PC-3 (cell line): ENCODE measurements at regions of chr7 and their contacts with region 1.

Region 1: GRCh38 chr7:116236020-116236630 is 25.8 kb downstream of the TES start:
- DNase-seq: peak; percentile 70
- ATAC-seq: peak; percentile 42
- H3K4me3 ChIP-seq: no peak overlapping the region
- H3K27ac ChIP-seq: no peak overlapping the region
- H3K4me1 ChIP-seq: peaks cover 26% of the 10 kb centered on the region
- H3K27me3 ChIP-seq: no peaks in the 10 kb centered on the region
- CTCF ChIP-seq: peak; percentile 72

Region 2: DNA sequence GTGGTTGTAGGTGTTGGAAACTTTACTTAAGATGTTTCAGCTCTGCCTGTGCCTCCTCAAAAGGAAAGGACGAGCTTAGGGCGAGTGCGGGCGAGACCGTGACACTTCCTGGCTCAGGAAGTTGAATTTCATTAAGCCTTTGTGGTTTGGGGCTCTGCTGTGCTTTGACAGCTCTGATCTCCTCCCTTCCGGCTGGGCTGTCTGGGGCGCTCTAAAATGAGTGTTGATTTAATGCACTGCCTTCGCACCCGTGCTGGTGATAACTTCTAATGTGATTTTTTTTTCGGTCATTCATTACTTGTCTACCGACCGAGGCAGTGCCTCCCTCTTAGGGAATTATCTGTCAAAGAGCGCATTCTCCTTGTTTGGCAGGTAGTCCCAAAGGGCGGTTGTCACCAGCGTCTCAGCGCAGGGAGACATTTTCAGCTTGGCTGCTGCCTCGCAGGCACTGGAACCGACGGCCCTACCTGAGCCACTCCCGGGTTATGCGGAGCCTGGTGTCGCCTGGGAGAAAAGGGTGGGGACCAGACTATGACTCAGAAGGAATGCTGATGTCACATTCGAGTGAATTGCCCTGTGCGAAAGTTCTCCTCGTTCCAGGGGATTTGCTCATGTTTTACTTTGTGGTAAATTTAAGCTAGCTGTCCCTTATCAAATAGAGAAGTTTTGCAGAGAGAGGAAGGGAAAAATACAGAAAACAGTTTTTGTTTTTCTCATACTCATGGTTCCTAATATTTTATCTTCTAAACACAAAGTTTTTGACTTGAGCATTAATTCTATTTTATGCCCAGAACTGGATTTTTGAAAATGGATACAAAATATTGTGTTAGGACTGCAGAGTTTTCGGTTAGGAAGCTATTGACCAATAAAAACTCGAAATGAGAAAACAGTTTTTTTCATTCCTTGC is 24.9 kb before region 1 on chr7:
- CTCF ChIA-PET with region 1: interaction called, 5 read pairs
- POLR2A ChIA-PET with region 1: interaction called, 6 read pairs
- intact Hi-C with region 1: loop called (anchors 1 kb)
- DNase-seq: peak; percentile 95
- ATAC-seq: peak; percentile 75
- H3K4me3 ChIP-seq: peak overlapping the region; percentile 93
- H3K27ac ChIP-seq: peak overlapping the region; percentile 97
- H3K4me1 ChIP-seq: peaks cover 40% of the 10 kb centered on the region
- H3K27me3 ChIP-seq: no peaks in the 10 kb centered on the region
- CTCF ChIP-seq: no peak

Region 3: DNA sequence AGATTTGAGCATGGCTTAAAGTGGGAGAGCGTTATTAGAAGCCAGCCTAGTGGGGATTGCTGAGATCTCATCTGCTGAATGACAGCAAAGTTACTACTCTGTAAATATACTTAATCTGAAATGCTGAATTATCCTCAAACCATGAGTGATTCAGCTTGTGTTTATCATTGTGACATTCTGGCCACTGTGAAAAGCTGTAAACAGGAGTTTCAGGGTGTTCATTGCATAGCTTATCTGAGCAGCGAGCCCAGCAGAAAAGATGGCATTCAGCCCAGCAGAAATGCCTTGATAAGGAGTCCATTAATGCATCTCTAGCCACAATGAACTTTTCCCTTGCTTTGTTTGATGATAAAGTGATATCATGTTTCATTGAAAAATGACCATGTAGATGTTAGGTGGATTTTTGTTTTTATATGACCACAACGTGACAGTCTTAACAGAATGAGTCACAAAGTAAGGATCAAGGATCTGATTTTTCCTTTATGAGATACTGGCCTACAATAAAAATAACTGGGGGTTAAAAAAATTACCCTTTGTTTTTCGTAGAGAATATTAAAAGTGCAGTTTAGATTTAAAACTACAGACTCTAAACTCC is 18.0 kb before region 1 on chr7:
- CTCF ChIA-PET with region 1: no interaction called
- POLR2A ChIA-PET with region 1: interaction called, 13 read pairs
- intact Hi-C with region 1: loop called (anchors 1 kb)
- DNase-seq: peak; percentile 98
- ATAC-seq: peak; percentile 76
- H3K4me3 ChIP-seq: peak overlapping the region; percentile 60
- H3K27ac ChIP-seq: peak overlapping the region; percentile 97
- H3K4me1 ChIP-seq: peaks cover 64% of the 10 kb centered on the region
- H3K27me3 ChIP-seq: no peaks in the 10 kb centered on the region
- CTCF ChIP-seq: no peak